Heart left ventricle (tissue), 16 donors: ENCODE measurements at regions of chr20 and their contacts with region 1.

Region 1: GRCh38 chr20:41357424-41358163 is 9.0 kb downstream of the EMILIN3 start:
- DNase-seq: peak in 3 of 5 donors; percentile 4 to 40 (median 30)
- ATAC-seq: no peak
- H3K4me3 ChIP-seq: no peak overlapping the region
- H3K27ac ChIP-seq: peak overlapping the region in 1 of 12 donors; percentile 70
- H3K4me1 ChIP-seq: peaks cover 0 to 34% (median 4%) of the 10 kb centered on the region in 12 donors
- H3K27me3 ChIP-seq: no peaks in the 10 kb centered on the region
- CTCF ChIP-seq: no peak
- POLR2A ChIP-seq: no peak

Region 2: GRCh38 chr20:41392871-41393704 is 35.5 kb after region 1 on chr20:
- intact Hi-C with region 1: loop called in 2 of 10 experiments (anchors 5 kb)
- DNase-seq: peak; percentile 67 to 92 (median 85)
- ATAC-seq: peak; percentile 77 to 90 (median 82)
- H3K4me3 ChIP-seq: no peak overlapping the region
- H3K27ac ChIP-seq: peak overlapping the region in 11 of 12 donors; percentile 14 to 85 (median 52)
- H3K4me1 ChIP-seq: peaks cover 0 to 59% (median 25%) of the 10 kb centered on the region in 12 donors
- H3K27me3 ChIP-seq: no peaks in the 10 kb centered on the region
- CTCF ChIP-seq: no peak
- POLR2A ChIP-seq: no peak